ENCODE measurements at regions of chr2 and their contacts with region 1.

Region 1: DNA sequence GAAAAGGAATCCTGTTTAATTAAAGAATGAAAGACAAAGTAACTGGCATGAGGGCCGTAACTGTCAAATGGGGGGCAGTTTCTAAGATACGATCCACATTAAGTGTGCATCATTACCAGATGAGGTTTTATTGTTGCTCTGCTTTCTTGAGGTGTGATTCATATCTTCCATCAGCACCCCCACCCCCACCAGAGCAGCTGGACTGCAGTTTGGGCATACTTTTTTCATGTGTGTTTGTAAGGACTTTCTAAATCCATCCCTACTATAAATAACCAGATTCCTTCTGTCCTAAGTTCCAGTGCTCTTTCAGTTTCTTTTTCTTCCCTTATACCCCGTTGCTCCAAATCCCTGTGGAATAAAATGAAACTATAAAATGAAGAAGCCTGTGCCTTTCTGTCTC is 142.1 kb downstream of the CDCA7 start:
- DNase-seq: no peak
- H3K4me3 ChIP-seq: no peak overlapping the region
- CTCF ChIP-seq: no peak

Region 2: DNA sequence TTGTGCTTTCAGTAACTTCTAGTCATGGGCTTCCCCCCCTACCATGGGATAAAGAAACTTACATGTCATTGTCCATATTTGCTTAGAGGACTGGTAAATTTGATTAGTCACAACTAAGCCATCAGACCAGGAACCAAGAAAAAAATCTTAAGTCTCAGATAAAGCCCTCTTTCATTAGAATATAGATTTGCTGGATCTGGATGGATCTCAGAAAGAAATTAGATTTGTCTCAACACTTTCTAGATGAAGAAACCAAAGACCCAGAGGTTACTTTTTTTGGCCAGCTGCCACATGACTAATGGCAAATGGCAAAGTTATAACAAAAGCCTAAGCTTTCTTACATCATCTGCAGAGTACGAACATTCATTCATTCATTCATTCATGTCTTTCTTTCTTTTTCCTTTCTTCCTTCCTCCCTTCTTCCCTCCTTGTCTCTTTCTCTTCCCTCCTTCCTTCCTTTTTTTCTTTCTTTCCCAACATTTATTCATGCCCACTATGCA is 81.9 kb before region 1 on chr2:
- in situ Hi-C with region 1: loop called (anchors 5 kb)
- DNase-seq: peak; percentile 54
- H3K4me3 ChIP-seq: no peak overlapping the region
- CTCF ChIP-seq: no peak

Measured in astrocyte of the cerebellum (primary cell).